ENCODE measurements at regions of chr18 and their contacts with region 1.

Region 1: DNA sequence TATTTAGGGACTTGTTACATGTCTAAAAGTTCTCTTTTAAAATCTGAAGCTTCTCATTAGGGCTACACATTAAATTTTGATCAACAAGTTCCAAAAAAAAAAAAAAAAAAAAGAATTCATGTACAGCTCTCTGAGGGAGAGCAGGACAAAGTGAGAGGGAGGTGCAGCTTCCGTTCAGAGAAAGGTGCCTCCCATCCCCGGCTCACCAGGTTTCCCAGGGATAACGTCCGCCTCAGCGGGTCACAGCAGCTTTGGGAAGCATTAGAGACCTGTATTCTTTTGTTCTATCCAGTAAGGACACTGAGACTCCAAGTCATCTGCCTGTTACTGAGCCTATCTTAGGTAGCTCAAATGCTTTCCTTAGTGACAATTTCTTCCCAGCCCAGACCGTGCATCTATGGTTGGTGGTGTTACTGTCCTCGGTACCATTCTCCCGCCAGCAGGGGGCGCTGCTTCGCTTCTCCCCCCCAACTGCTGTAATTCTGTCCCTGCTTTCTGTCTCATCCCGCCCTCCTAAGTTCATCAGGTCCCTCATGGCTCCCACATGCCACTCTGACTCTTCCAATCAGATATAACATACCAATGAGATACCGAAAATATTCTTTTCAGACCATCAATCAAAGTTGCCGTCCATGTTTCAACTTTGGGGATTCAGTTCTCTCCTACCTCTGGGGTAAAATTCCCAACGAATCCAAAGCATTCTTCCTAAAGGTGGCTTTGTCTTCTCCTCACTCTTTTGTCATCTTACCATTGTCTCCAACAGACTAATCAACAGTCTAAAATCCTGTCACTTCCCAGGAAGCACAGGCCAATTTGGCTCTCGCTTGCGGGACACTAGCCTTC is 466.5 kb downstream of the METTL4 start:
- DNase-seq: peak; percentile 11
- H3K4me3 ChIP-seq: no peak overlapping the region
- H3K27ac ChIP-seq: no peak overlapping the region
- H3K27me3 ChIP-seq: no peaks in the 10 kb centered on the region
- CTCF ChIP-seq: peak; percentile 78

Region 2: GRCh38 chr18:2087877-2088673 is 16.8 kb before region 1 on chr18:
- CTCF ChIA-PET with region 1: interaction called, 26 read pairs
- POLR2A ChIA-PET with region 1: no interaction called
- DNase-seq: no peak
- H3K4me3 ChIP-seq: no peak overlapping the region
- H3K27ac ChIP-seq: no peak overlapping the region
- H3K27me3 ChIP-seq: no peaks in the 10 kb centered on the region
- CTCF ChIP-seq: no peak

Region 3: GRCh38 chr18:2134364-2134763 is 29.5 kb after region 1 on chr18:
- CTCF ChIA-PET with region 1: interaction called, 10 read pairs
- POLR2A ChIA-PET with region 1: no interaction called
- DNase-seq: no peak
- H3K4me3 ChIP-seq: no peak overlapping the region
- H3K27ac ChIP-seq: no peak overlapping the region
- H3K27me3 ChIP-seq: no peaks in the 10 kb centered on the region
- CTCF ChIP-seq: 0 out of 2 replicates have a peak, but pooled peaks have one; percentile 10

Region 4: GRCh38 chr18:2240311-2240705 is 135.5 kb after region 1 on chr18:
- CTCF ChIA-PET with region 1: interaction called, 15 read pairs
- POLR2A ChIA-PET with region 1: no interaction called
- DNase-seq: peak; percentile 48
- H3K4me3 ChIP-seq: peak overlapping the region; percentile 1; the same call in 1 of the 2 replicates
- H3K27ac ChIP-seq: peak overlapping the region; percentile 65
- H3K27me3 ChIP-seq: no peaks in the 10 kb centered on the region
- CTCF ChIP-seq: no peak

Region 5: DNA sequence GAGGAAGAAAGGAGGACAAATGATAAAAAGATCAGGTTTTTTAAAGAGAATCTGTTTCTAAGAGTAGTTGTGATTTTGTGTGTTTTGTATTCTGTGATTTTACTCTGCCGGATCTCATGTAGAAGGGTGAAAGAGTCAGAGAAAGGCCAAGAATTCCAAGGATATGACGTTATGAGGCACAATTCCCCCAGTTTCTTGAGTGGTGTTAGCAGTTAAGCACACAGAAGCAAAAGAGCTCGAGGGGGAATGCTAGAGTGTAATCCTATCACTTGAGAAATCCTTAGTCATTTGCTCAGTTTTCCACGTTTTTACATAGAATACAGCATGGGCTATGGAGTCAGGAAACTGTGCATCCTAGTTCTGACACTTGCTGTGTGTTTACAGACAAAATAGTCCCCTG is 431.7 kb after region 1 on chr18:
- CTCF ChIA-PET with region 1: interaction called, 362 read pairs
- POLR2A ChIA-PET with region 1: no interaction called
- DNase-seq: no peak
- H3K4me3 ChIP-seq: no peak overlapping the region
- H3K27ac ChIP-seq: no peak overlapping the region
- H3K27me3 ChIP-seq: no peaks in the 10 kb centered on the region
- CTCF ChIP-seq: no peak

Region 6: GRCh38 chr18:2555895-2556294 is 451.1 kb after region 1 on chr18:
- CTCF ChIA-PET with region 1: interaction called, 362 read pairs
- POLR2A ChIA-PET with region 1: no interaction called
- DNase-seq: no peak
- H3K4me3 ChIP-seq: no peak overlapping the region
- H3K27ac ChIP-seq: no peak overlapping the region
- H3K27me3 ChIP-seq: no peaks in the 10 kb centered on the region
- CTCF ChIP-seq: no peak